ENCODE measurements at regions of chr3 and their contacts with region 1.

Region 1: DNA sequence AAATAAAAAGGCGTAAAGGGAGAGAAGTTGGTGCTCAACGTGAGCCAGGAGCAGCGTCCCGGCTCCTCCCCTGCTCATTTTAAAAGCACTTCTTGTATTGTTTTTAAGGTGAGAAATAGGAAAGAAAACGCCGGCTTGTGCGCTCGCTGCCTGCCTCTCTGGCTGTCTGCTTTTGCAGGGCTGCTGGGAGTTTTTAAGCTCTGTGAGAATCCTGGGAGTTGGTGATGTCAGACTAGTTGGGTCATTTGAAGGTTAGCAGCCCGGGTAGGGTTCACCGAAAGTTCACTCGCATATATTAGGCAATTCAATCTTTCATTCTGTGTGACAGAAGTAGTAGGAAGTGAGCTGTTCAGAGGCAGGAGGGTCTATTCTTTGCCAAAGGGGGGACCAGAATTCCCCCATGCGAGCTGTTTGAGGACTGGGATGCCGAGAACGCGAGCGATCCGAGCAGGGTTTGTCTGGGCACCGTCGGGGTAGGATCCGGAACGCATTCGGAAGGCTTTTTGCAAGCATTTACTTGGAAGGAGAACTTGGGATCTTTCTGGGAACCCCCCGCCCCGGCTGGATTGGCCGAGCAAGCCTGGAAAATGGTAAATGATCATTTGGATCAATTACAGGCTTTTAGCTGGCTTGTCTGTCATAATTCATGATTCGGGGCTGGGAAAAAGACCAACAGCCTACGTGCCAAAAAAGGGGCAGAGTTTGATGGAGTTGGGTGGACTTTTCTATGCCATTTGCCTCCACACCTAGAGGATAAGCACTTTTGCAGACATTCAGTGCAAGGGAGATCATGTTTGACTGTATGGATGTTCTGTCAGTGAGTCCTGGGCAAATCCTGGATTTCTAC is at the start of gene RARB:
- DNase-seq: peak; percentile 79 to 89
- H3K4me3 ChIP-seq: peak within 1 kb of the TSS; percentile 65 to 66
- H3K27ac ChIP-seq: peak within 1 kb of the TSS; percentile 95 to 96
- H3K4me1 ChIP-seq: peaks cover 4 to 5% of the 10 kb centered on the region in 2 donors
- H3K27me3 ChIP-seq: no peaks in the 10 kb centered on the region
- CTCF ChIP-seq: peak in 1 of 4 experiments; percentile 9
- POLR2A ChIP-seq: peak; percentile 84 to 86
- total RNA-seq, gene RARB: 6.7 to 63.0 (median 14.5) TPM

Region 2: GRCh38 chr3:25582242-25582641 is 154.1 kb after region 1 on chr3:
- intact Hi-C with region 1: loop called (anchors 10 kb)
- DNase-seq: no peak
- H3K4me3 ChIP-seq: no peak overlapping the region
- H3K27ac ChIP-seq: no peak overlapping the region
- H3K4me1 ChIP-seq: no peaks in the 10 kb centered on the region
- H3K27me3 ChIP-seq: no peaks in the 10 kb centered on the region
- CTCF ChIP-seq: no peak
- POLR2A ChIP-seq: no peak